Sciatic nerve (tissue), 2 donors: ENCODE measurements at regions of chr4 and their contacts with region 1.

Region 1: GRCh38 chr4:17362430-17362829 is 149.5 kb downstream of the QDPR start:
- DNase-seq: no peak
- ATAC-seq: no peak

Region 2: DNA sequence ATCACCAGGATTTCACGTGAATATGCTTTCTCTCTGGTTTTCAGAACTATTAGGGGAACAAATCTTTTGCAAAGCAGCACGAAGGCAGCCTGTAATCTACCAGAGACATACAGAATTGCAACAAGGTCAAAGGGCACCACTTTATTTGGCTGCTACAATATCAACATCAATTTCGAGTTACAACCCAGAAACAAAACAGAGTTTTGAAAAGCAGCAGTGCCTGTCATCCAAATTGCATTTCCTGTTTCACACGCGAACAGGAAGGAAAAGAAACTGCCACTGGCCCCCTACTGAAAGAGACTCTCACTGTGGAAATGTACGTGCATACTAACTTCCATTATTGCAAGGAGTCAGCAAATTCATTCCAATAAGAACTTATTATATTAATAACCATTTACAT is 1951.7 kb before region 1 on chr4:
- intact Hi-C with region 1: loop called (anchors 5 kb)
- DNase-seq: no peak
- ATAC-seq: no peak

Region 3: DNA sequence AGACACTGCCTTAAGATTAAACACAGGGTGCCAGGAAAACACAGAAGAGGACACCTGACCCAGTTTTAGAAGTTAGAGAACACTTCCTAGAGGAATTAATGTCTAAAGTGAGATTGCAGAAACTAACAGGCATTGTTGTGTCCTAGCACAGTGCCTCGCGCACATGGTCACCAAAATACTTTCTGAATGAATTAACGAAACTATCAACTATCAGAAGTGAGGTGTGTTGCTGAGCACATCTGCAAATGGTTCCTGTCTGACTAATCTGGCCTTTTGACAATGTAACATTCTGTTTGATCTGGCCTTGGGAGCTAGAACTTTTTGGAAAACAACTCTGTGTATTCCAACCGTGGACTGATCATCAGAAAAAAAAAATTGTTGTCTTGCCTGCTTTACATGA is 1215.9 kb after region 1 on chr4:
- intact Hi-C with region 1: no loop called
- DNase-seq: no peak
- ATAC-seq: no peak